ENCODE measurements at regions of chr20 and their contacts with region 1.

Region 1: DNA sequence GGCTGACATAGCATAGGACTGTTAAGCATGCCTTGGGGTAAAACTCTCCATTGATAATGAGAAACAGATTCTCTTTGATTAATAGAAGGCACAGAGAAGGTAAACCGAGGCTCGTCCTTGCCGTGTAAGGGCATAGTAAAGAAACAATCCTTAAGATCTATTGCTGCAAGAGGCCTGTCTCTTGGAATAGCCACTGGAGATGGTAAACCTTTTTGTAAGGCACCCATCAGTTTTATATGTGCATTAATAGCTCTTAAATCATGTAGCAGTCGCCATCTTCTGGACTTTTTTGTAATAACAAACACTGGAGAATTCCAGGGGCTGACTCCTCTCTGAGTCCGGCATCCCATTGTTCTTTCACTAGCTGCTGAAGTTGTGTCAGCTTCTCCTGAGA is 8.4 kb upstream of the ABHD12 start:
- DNase-seq: peak in 1 of 2 donors; percentile 66
- H3K4me3 ChIP-seq: no peak overlapping the region
- H3K27ac ChIP-seq: no peak overlapping the region
- H3K4me1 ChIP-seq: no peaks in the 10 kb centered on the region
- H3K27me3 ChIP-seq: peaks cover 4% of the 10 kb centered on the region
- CTCF ChIP-seq: peak; percentile 25 to 71 (median 54)

Region 2: GRCh38 chr20:25065625-25066338 is 333.3 kb before region 1 on chr20:
- intact Hi-C with region 1: loop called (anchors 5 kb)
- DNase-seq: peak in 1 of 2 donors; percentile 85
- H3K4me3 ChIP-seq: no peak overlapping the region
- H3K27ac ChIP-seq: no peak overlapping the region
- H3K4me1 ChIP-seq: no peaks in the 10 kb centered on the region
- H3K27me3 ChIP-seq: no peaks in the 10 kb centered on the region
- CTCF ChIP-seq: peak; percentile 72 to 85 (median 78)

Region 3: DNA sequence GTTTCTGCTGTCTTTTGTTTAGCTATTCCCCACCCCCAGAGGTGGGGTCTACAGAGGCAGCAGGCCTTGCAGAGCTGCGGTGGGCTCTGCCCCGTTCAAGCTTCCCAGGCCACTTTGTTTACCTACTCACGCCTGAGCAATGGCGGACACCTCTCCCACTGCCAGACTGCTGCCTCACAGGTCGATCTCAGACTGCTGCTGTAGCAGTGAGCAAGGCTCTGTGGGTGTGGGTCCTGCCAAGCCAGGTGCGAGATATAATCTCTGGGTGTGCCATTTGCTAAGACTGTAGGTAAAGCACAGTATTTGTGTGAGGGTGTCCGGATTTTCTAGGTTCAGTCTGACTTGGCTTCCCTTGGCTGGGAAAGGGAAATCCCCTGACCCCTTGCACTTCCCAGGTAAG is 321.3 kb after region 1 on chr20:
- intact Hi-C with region 1: no loop called
- DNase-seq: no peak
- H3K4me3 ChIP-seq: no peak overlapping the region
- H3K27ac ChIP-seq: no peak overlapping the region
- H3K4me1 ChIP-seq: no peaks in the 10 kb centered on the region
- H3K27me3 ChIP-seq: no peaks in the 10 kb centered on the region
- CTCF ChIP-seq: no peak

Measured in ascending aorta (tissue), 2 donors.